ENCODE measurements at regions of chr9 and their contacts with region 1.

Region 1: DNA sequence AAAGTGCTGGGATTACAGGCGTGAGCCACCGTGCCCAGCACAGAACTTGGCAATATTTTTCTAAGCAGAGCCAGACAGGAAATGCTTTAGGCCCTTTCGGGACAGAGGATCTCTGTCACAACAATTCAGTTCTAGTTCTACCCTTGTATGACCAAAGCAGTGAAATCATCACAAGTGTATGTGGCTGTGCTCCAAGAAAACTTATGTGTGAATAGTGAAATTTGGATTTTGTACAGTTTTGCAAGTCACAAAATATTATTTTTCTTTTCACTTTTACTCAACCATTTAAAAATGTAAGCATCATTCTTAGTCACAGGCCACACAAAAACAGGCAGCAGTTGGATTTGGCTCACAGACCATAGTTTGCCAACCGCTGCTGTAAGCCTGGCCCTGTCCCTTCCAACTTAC is 20.4 kb upstream of the PRUNE2 start:
- DNase-seq: peak; percentile 23 to 86
- H3K4me3 ChIP-seq: no peak overlapping the region
- H3K27ac ChIP-seq: peak overlapping the region; percentile 88 to 91
- H3K4me1 ChIP-seq: peaks cover 5 to 6% of the 10 kb centered on the region in 2 donors
- H3K27me3 ChIP-seq: no peaks in the 10 kb centered on the region
- CTCF ChIP-seq: no peak

Region 2: GRCh38 chr9:76717613-76718012 is 208.7 kb before region 1 on chr9:
- intact Hi-C with region 1: loop called (anchors 5 kb)
- DNase-seq: peak in 1 of 2 donors; percentile 78
- H3K4me3 ChIP-seq: no peak overlapping the region
- H3K27ac ChIP-seq: peak overlapping the region; percentile 49 to 67
- H3K4me1 ChIP-seq: peaks cover 0 to 10% of the 10 kb centered on the region in 2 donors
- H3K27me3 ChIP-seq: no peaks in the 10 kb centered on the region
- CTCF ChIP-seq: no peak

Region 3: GRCh38 chr9:76818271-76818670 is 108.1 kb before region 1 on chr9:
- intact Hi-C with region 1: loop called (anchors 5 kb)
- DNase-seq: peak; percentile 82 to 96
- H3K4me3 ChIP-seq: no peak overlapping the region
- H3K27ac ChIP-seq: peak overlapping the region; percentile 84 to 90
- H3K4me1 ChIP-seq: peaks cover 3 to 24% of the 10 kb centered on the region in 2 donors
- H3K27me3 ChIP-seq: no peaks in the 10 kb centered on the region
- CTCF ChIP-seq: no peak

Region 4: GRCh38 chr9:76835571-76836283 is 90.6 kb before region 1 on chr9:
- intact Hi-C with region 1: loop called (anchors 1 kb)
- DNase-seq: peak in 1 of 2 donors; percentile 66
- H3K4me3 ChIP-seq: peak overlapping the region; percentile 10 to 28
- H3K27ac ChIP-seq: peak overlapping the region; percentile 86 to 94
- H3K4me1 ChIP-seq: peaks cover 0 to 31% of the 10 kb centered on the region in 2 donors
- H3K27me3 ChIP-seq: no peaks in the 10 kb centered on the region
- CTCF ChIP-seq: no peak

Region 5: GRCh38 chr9:76987594-76988200 is 61.4 kb after region 1 on chr9:
- intact Hi-C with region 1: loop called (anchors 5 kb)
- DNase-seq: no peak
- H3K4me3 ChIP-seq: no peak overlapping the region
- H3K27ac ChIP-seq: no peak overlapping the region
- H3K4me1 ChIP-seq: peaks cover 0 to 7% of the 10 kb centered on the region in 2 donors
- H3K27me3 ChIP-seq: no peaks in the 10 kb centered on the region
- CTCF ChIP-seq: peak; percentile 35 to 59 (median 41)

Measured in ascending aorta (tissue), 2 donors.